ENCODE measurements at regions of chr7 and their contacts with region 1.

Region 1: DNA sequence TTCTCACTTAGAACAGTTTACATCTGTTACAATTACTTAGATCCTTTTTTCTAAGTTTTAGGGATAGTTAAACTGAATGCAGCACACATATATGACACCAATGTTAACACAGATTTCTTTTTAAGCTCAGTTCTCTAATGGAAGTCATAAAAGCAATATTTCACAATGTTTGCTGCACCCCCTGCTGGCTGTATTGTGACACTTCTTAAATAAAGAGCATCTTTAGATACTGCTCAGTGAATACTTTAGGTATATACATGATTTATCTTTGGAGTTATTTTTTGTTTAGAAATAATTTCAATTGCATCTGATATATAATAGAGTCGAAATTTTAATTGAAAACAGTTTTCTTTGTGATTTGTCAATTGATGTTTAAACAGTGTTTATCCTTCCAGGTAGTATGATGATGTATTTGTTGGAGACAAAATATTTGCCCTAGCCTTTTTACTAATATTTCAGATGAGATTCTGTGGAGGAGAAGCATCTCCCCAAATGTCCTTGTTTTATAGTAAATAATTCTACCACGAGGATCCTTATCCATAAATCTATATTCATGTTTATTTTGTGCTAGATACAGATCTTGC is 174.4 kb downstream of the ST7 start:
- DNase-seq: peak; percentile 73
- ATAC-seq: 0 out of 2 replicates have a peak, but pooled peaks have one; percentile 11
- H3K4me3 ChIP-seq: no peak overlapping the region
- H3K27ac ChIP-seq: peak overlapping the region; percentile 42; the same call in 1 of the 2 replicates
- H3K4me1 ChIP-seq: peaks cover 65% of the 10 kb centered on the region
- H3K27me3 ChIP-seq: no peaks in the 10 kb centered on the region
- CTCF ChIP-seq: peak; percentile 86

Region 2: DNA sequence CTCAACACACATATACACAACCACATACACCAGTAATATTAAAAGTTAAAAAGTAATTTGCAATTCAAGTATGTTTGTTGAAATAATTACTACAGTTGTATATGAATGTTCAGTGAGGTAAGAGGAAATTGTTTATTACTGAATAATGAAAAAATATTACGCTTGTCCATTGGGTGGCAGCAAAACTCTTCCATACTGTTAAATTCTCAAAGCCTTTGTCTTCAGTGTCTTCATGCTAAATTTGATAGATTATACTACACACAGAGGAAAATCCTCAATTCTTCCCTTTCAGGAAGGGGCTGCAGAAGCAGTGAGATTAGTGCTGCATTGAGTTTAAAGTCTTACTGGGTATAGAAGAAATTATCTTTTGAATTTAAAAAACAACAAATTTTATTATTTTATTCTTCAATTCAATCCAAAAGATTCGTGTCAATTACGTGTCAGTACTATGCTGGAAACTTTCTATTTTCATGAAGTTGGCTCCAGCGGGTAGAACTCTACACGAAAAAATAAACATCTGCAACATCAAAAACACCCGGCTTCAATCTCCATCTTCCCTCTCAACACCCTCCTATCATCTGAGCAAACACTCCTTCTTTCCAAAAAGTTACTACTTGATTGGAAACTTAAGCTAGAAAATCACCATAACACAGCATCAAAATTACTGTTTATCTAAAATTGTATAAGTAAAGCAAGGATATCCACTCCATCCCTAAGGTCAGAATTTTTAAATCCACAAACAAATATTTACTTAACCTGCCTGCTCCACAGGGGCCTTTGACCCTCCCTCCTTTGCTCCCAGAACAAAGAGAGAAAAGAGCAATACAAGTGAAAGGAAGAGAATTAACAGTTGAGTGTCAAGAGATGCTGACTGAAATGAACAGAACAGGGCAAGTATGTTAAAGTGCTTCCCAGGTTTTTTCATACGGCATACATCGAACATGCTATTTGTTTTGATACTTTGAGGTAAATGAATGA is 954.3 kb before region 1 on chr7:
- CTCF ChIA-PET with region 1: no interaction called
- POLR2A ChIA-PET with region 1: no interaction called
- intact Hi-C with region 1: loop called (anchors 10 kb)
- DNase-seq: peak; percentile 83
- ATAC-seq: peak; percentile 37
- H3K4me3 ChIP-seq: peak overlapping the region; percentile 48
- H3K27ac ChIP-seq: peak overlapping the region; percentile 55
- H3K4me1 ChIP-seq: peaks cover 35% of the 10 kb centered on the region
- H3K27me3 ChIP-seq: no peaks in the 10 kb centered on the region
- CTCF ChIP-seq: peak; percentile 72

Region 3: DNA sequence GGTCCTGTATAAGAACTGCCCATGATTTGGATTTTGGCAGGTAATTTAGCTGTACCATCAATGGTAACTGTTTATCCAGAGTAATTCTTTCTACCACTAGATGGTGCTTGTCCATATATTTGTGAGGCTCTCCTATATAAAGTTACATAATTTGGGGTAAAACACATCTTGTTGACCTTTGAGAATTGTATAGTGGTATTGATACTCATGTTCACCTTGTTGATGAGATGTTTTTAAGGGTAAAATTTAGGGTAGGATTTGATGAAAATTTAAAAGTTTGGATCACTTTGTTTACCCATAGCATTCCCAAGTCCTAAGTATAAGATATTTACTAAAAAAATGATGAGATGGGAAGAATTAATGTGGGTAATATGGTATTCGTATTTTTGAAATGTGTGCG is 142.8 kb before region 1 on chr7:
- CTCF ChIA-PET with region 1: interaction called, 18 read pairs
- POLR2A ChIA-PET with region 1: interaction called, 4 read pairs
- intact Hi-C with region 1: no loop called
- DNase-seq: peak; percentile 62
- ATAC-seq: peak; percentile 55
- H3K4me3 ChIP-seq: no peak overlapping the region
- H3K27ac ChIP-seq: no peak overlapping the region
- H3K4me1 ChIP-seq: peaks cover 21% of the 10 kb centered on the region
- H3K27me3 ChIP-seq: no peaks in the 10 kb centered on the region
- CTCF ChIP-seq: peak; percentile 81

Region 4: GRCh38 chr7:117157241-117158209 is 29.8 kb after region 1 on chr7:
- CTCF ChIA-PET with region 1: interaction called, 5 read pairs
- POLR2A ChIA-PET with region 1: no interaction called
- intact Hi-C with region 1: loop called (anchors 1 kb)
- DNase-seq: peak; percentile 93
- ATAC-seq: peak; percentile 89
- H3K4me3 ChIP-seq: no peak overlapping the region
- H3K27ac ChIP-seq: peak overlapping the region; percentile 54
- H3K4me1 ChIP-seq: peaks cover 31% of the 10 kb centered on the region
- H3K27me3 ChIP-seq: no peaks in the 10 kb centered on the region
- CTCF ChIP-seq: peak; percentile 54

Region 5: GRCh38 chr7:117212969-117213877 is 85.5 kb after region 1 on chr7:
- CTCF ChIA-PET with region 1: interaction called, 6 read pairs
- POLR2A ChIA-PET with region 1: no interaction called
- intact Hi-C with region 1: loop called (anchors 5 kb)
- DNase-seq: peak; percentile 78
- ATAC-seq: peak; percentile 70
- H3K4me3 ChIP-seq: no peak overlapping the region
- H3K27ac ChIP-seq: no peak overlapping the region
- H3K4me1 ChIP-seq: no peaks in the 10 kb centered on the region
- H3K27me3 ChIP-seq: no peaks in the 10 kb centered on the region
- CTCF ChIP-seq: peak; percentile 93

Measured in PC-3 (cell line).